Motor neuron (in vitro differentiated cells): ENCODE measurements at regions of chr10 and their contacts with region 1.

Region 1: DNA sequence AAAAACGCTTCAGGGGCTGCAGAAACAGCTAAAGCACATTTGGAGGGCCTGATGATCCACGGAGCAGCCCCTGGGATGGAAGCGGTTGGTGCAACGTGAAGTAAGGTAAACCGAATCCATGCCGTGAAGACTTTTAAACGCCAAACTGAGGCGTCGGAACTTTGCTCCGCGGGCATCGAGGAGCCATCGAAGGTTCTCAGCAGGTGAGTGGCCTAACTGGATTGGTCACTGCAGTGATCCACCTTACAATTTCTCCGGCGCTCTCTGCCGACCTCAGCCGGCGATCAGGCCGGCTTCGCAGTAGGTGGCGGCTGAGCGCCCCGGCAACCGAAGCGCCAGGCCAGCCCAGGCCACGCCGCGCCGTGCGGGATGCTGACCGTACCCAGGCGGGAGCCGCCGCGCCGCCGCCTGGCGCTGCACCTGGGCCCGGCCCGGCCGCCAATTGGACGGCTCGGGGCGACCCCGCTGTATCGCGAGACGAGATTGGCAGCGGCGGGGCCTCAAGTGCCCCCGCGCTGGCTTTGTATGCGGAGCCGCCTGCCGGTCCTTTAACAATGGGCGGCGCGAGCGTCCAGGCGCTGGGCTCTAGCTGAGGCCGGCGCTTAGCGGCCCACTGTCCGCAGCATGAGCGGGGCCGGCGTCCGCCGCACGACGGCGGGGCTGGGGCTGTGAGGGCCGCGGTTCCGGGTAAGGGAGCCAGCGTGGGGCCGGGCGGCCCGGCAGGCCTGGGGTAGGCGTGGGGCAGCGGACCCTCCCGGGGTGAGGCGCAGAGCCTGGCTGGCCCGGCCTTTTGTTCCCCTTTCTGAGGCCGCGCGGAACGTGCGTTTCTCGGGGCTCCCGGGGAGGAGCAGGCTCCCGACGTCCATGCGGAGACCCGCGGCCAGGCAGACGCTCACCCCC is at the start of gene CCNJ:
- ATAC-seq: peak; percentile 86 to 95 (median 93)
- H3K4me3 ChIP-seq: peak within 1 kb of the TSS; percentile 63 to 97 (median 82)
- H3K27ac ChIP-seq: peak within 1 kb of the TSS; percentile 95 to 96
- H3K4me1 ChIP-seq: peaks cover 5 to 21% of the 10 kb centered on the region in 2 donors
- total RNA-seq, gene CCNJ: 4.1 to 42.3 (median 15.1) TPM

Region 2: GRCh38 chr10:95683966-95684365 is 359.3 kb before region 1 on chr10:
- in situ Hi-C with region 1: no loop called
- ATAC-seq: no peak
- H3K4me3 ChIP-seq: no peak overlapping the region
- H3K27ac ChIP-seq: no peak overlapping the region
- H3K4me1 ChIP-seq: no peaks in the 10 kb centered on the region

Region 3: DNA sequence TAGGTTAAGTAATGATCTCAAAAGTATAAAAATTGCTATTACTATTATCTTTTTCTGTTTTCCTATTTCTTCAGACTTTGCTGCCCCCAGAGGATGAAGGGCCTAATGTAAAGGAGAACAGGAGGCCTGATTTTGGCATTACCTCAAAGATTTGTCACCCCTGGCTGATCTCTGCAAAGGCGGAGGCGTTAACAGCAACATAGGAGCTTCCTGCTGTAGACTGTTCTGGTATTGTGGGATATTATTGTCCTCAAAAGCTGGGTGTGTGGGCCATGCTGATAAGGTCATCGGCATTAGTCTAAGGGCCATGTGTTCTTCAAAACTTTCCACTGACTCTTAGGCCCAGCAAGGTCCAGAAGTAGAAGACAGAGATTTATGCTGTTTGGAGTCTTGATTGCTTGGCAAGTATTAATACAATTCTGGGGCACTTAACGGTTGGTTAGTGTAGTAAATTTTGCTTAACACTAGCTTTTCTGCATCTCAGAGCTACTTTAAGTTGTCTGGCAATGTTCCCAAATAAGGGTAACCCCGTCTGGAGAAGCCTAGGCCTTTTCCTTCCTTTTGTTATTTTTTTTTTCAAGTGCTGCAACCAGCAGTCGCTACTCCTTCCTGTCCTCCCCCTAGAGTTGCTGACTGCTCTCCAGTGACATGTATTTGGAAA is 301.3 kb before region 1 on chr10:
- in situ Hi-C with region 1: no loop called
- ATAC-seq: peak in 2 of 8 experiments; percentile 17 to 43
- H3K4me3 ChIP-seq: no peak overlapping the region
- H3K27ac ChIP-seq: no peak overlapping the region
- H3K4me1 ChIP-seq: no peaks in the 10 kb centered on the region

Region 4: DNA sequence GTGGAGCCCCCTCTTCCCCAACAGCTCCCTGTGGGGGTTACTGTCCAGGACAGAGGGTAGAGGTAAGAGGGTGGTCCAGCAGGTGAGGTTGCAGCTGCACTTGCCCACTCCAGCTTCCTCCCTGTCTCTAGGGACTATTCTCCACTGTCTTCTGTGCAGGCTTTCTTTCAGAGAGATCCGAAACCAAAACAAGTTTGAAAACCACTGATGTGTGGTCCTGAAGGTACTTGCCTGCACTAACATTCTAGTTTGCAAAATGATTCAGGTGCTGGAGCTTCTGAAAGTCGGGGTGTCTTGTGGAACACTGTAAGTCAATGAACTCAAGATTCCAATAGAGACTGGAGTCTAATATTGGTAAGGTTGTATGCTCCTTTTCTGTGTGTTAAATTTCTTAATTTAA is 165.0 kb after region 1 on chr10:
- in situ Hi-C with region 1: loop called in 1 of 9 experiments (anchors 25 kb)
- ATAC-seq: no peak
- H3K4me3 ChIP-seq: no peak overlapping the region
- H3K27ac ChIP-seq: no peak overlapping the region
- H3K4me1 ChIP-seq: no peaks in the 10 kb centered on the region

Region 5: GRCh38 chr10:96306516-96306915 is 263.2 kb after region 1 on chr10:
- in situ Hi-C with region 1: loop called in 1 of 9 experiments (anchors 25 kb)
- ATAC-seq: no peak
- H3K4me3 ChIP-seq: no peak overlapping the region
- H3K27ac ChIP-seq: no peak overlapping the region
- H3K4me1 ChIP-seq: peaks cover 12 to 17% of the 10 kb centered on the region in 2 donors

Region 6: DNA sequence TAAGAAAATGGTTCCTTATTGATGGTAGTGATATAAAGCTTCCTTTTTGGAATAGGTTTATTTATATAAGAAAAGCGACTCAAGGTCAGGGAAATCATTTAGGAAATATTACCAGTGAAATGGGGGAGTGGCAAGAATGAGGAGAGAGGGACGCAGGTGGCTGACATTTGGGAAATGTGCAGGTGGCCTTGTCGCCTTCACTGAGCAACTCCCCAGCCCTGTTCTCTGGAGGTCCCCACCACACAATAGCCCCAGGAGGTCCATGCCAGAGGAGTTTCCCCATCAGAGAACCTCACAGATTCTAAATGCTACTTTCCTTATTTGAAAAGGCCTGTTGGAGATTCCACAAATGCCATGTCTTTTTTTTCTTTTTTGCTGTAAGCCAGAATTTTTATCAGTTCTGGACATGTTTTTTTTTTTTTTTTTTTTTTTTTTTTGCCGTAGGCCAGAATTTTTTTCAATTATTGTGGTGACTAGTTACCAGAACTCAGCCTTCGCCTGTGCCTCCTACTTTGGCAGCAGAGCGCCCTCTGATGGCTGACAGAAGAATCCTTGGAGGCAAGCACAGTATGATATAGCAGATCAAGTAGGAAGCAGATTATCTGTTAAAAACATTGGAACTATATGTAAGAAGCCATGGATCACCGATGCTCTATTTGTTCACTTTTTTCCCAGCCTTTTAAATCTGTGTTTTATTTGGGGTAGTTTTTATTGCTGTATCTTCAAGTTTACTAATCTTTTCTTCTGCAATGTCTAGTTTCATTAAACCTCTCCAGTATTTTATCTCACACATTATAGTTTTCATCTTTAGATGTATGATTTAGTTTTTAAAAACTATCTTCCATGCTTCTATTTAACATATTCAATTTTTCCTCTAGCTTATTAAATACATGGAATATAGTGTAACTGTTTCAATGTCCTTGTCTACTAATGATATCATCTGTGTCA is 296.9 kb after region 1 on chr10:
- in situ Hi-C with region 1: loop called in 2 of 9 experiments (anchors 25 kb)
- ATAC-seq: peak; percentile 74 to 97 (median 88)
- H3K4me3 ChIP-seq: no peak overlapping the region
- H3K27ac ChIP-seq: no peak overlapping the region
- H3K4me1 ChIP-seq: peaks cover 0 to 3% of the 10 kb centered on the region in 2 donors